CD8-positive, alpha-beta T cell (primary cell): ENCODE measurements at regions of chr4 and their contacts with region 1.

Region 1: GRCh38 chr4:171742436-171742835 is 70.8 kb upstream of the GALNTL6 start:
- DNase-seq: no peak
- ATAC-seq: no peak
- H3K4me3 ChIP-seq: no peak overlapping the region
- H3K4me3 Mint-ChIP-seq: no peak overlapping the region
- H3K27ac ChIP-seq: no peak overlapping the region
- H3K27ac Mint-ChIP-seq: no peak overlapping the region
- H3K4me1 ChIP-seq: no peaks in the 10 kb centered on the region
- H3K4me1 Mint-ChIP-seq: no peaks in the 10 kb centered on the region
- H3K27me3 ChIP-seq: no peaks in the 10 kb centered on the region
- H3K27me3 Mint-ChIP-seq: no peaks in the 10 kb centered on the region
- CTCF ChIP-seq: no peak

Region 2: DNA sequence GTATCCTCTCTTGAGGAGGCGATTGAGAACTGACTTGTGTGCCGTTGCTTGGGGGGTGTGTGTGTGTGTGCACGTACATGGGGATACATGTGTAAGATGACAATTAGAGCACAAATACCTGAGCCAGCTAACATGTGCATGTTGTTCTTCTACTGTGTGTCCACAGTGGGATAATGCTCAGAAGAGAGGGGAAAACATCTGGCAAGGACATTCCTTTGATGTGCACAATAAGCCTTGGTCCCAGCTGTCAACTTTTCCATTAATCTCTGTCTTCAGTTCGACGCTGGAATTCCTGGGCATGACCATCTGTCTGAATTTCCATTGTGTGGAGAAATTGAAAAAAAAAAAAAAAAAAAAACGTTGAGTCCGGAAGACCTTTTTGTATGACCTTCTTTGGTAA is 521.3 kb before region 1 on chr4:
- CTCF ChIA-PET with region 1: no interaction called
- POLR2A ChIA-PET with region 1: no interaction called
- intact Hi-C with region 1: loop called in 1 of 2 experiments (anchors 5 kb)
- DNase-seq: no peak
- ATAC-seq: no peak
- H3K4me3 ChIP-seq: no peak overlapping the region
- H3K4me3 Mint-ChIP-seq: no peak overlapping the region
- H3K27ac ChIP-seq: no peak overlapping the region
- H3K27ac Mint-ChIP-seq: no peak overlapping the region
- H3K4me1 ChIP-seq: no peaks in the 10 kb centered on the region
- H3K4me1 Mint-ChIP-seq: no peaks in the 10 kb centered on the region
- H3K27me3 ChIP-seq: no peaks in the 10 kb centered on the region
- H3K27me3 Mint-ChIP-seq: no peaks in the 10 kb centered on the region
- CTCF ChIP-seq: no peak

Region 3: GRCh38 chr4:171721937-171722336 is 20.5 kb before region 1 on chr4:
- CTCF ChIA-PET with region 1: no interaction called
- POLR2A ChIA-PET with region 1: no interaction called
- intact Hi-C with region 1: no loop called
- DNase-seq: no peak
- ATAC-seq: no peak
- H3K4me3 ChIP-seq: no peak overlapping the region
- H3K4me3 Mint-ChIP-seq: no peak overlapping the region
- H3K27ac ChIP-seq: no peak overlapping the region
- H3K27ac Mint-ChIP-seq: no peak overlapping the region
- H3K4me1 ChIP-seq: no peaks in the 10 kb centered on the region
- H3K4me1 Mint-ChIP-seq: no peaks in the 10 kb centered on the region
- H3K27me3 ChIP-seq: no peaks in the 10 kb centered on the region
- H3K27me3 Mint-ChIP-seq: no peaks in the 10 kb centered on the region
- CTCF ChIP-seq: no peak

Region 4: DNA sequence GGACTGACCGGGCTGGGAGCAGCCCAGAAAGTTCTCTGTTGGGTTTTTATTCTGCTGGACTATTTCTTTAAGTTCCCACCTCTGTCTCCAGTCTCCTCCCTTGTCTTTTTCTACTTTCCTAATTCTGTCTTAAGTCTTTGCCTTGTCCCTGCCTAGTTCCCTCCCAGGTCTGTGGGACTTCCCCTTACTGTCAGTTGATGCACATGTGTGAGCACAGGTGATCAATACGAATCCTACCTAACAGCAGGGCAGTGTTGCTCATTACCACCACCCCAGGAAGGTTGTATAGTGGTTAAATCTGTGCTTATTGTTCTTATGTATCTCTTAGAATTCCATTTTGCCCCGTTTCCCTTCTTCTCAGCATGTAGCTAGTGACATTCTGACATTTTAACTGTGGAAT is 132.9 kb after region 1 on chr4:
- CTCF ChIA-PET with region 1: no interaction called
- POLR2A ChIA-PET with region 1: no interaction called
- intact Hi-C with region 1: no loop called
- DNase-seq: no peak
- ATAC-seq: no peak
- H3K4me3 ChIP-seq: no peak overlapping the region
- H3K4me3 Mint-ChIP-seq: no peak overlapping the region
- H3K27ac ChIP-seq: no peak overlapping the region
- H3K27ac Mint-ChIP-seq: no peak overlapping the region
- H3K4me1 ChIP-seq: no peaks in the 10 kb centered on the region
- H3K4me1 Mint-ChIP-seq: no peaks in the 10 kb centered on the region
- H3K27me3 ChIP-seq: no peaks in the 10 kb centered on the region
- H3K27me3 Mint-ChIP-seq: no peaks in the 10 kb centered on the region
- CTCF ChIP-seq: no peak